Heart right ventricle (tissue), 16 donors: ENCODE measurements at regions of chr2 and their contacts with region 1.

Region 1: GRCh38 chr2:8681786-8682692 is at the start of gene ID2:
- DNase-seq: peak; percentile 99 to 100
- ATAC-seq: peak; percentile 69 to 90 (median 86)
- H3K4me3 ChIP-seq: peak within 1 kb of the TSS; percentile 67 to 96 (median 80)
- H3K27ac ChIP-seq: peak within 1 kb of the TSS; percentile 93 to 100 (median 99)
- H3K4me1 ChIP-seq: peaks cover 0 to 53% (median 32%) of the 10 kb centered on the region in 9 donors
- H3K27me3 ChIP-seq: peaks cover 0 to 12% (median 0%) of the 10 kb centered on the region in 7 donors
- CTCF ChIP-seq: no peak
- total RNA-seq, gene ID2: 20.8 to 49.7 (median 27.2) TPM

Region 2: DNA sequence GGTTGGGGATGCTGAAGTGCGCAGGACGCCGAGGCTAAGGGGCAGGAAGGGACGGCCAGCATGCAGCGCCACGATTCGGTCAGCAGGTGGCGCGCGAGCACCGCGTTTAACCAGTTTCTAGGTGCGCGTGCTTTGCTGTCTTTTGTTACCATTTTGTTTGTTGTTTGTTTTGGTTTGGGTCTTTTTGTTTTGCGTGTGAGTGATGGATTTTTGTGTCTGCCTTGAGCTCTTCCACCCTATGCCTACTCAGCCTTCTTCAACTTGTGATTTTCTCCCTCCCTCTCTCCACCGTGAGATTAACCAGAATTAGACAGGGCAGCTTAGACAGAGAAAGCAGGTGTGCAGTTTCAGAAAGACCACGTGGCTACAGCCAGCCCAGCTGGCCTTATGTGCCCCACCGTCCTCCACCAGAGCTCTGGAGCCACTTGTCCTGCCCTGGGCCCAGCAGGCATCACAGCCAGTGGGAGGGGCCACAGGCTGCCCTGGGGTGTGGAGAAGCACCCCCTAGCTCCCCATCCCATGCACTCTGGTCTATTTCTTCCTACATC is 1584.6 kb before region 1 on chr2:
- intact Hi-C with region 1: loop called in 4 of 10 experiments (anchors 5 to 10 kb)
- DNase-seq: peak; percentile 64 to 77
- ATAC-seq: peak; percentile 83 to 95 (median 90)
- H3K4me3 ChIP-seq: peak overlapping the region in 2 of 10 donors; percentile 4 to 38
- H3K27ac ChIP-seq: no peak overlapping the region
- H3K4me1 ChIP-seq: peaks cover 0 to 9% (median 3%) of the 10 kb centered on the region in 9 donors
- H3K27me3 ChIP-seq: no peaks in the 10 kb centered on the region
- CTCF ChIP-seq: peak; percentile 95 to 99 (median 99)

Region 3: DNA sequence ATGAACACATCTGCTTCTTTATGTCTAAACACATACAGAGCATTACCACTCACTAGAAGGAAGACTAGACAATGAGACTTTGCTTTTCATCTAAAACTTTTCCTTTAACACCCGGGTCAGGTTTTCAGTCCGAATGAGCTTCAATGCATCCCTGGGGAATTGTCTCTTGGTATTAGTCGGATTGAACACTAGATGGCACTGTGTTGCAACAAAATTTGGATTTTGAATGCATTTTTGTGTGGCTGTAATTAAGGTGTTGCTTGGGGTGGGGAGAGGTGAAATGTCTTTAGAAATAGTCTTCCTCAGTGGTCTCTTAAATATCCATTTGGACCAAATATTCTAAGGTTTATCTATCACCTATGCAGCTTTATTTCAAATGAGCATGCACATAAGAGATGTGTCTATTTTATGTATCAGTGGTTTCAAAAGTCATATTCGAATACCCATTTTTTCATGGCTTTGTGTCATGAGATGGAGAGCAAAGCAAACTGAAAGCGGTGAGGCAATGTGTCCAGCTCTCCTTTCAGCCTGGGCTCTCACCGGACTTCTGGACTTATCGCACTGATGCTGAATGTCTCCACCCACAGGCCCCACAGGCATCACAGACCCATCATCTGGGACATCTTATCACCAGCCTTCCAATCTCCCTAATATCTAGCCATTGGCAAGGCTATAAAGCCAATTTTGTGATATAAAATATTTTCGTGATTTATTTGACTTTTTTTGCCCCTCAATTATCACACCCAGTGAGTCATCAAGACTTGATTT is 1254.6 kb before region 1 on chr2:
- intact Hi-C with region 1: loop called (anchors 1 to 5 kb)
- DNase-seq: peak in 1 of 2 donors; percentile 52
- ATAC-seq: peak in 5 of 8 donors; percentile 34 to 54 (median 43)
- H3K4me3 ChIP-seq: no peak overlapping the region
- H3K27ac ChIP-seq: no peak overlapping the region
- H3K4me1 ChIP-seq: peaks cover 0 to 38% (median 3%) of the 10 kb centered on the region in 9 donors
- H3K27me3 ChIP-seq: peaks cover 0 to 62% (median 32%) of the 10 kb centered on the region in 7 donors
- CTCF ChIP-seq: peak; percentile 54 to 86 (median 76)

Region 4: GRCh38 chr2:8132351-8132831 is 549.6 kb before region 1 on chr2:
- intact Hi-C with region 1: loop called in 2 of 10 experiments (anchors 5 to 10 kb)
- DNase-seq: peak; percentile 24 to 45
- ATAC-seq: peak; percentile 53 to 83 (median 65)
- H3K4me3 ChIP-seq: no peak overlapping the region
- H3K27ac ChIP-seq: peak overlapping the region in 7 of 10 donors; percentile 15 to 74 (median 48)
- H3K4me1 ChIP-seq: peaks cover 4 to 44% (median 24%) of the 10 kb centered on the region in 9 donors
- H3K27me3 ChIP-seq: no peaks in the 10 kb centered on the region
- CTCF ChIP-seq: no peak

Region 5: DNA sequence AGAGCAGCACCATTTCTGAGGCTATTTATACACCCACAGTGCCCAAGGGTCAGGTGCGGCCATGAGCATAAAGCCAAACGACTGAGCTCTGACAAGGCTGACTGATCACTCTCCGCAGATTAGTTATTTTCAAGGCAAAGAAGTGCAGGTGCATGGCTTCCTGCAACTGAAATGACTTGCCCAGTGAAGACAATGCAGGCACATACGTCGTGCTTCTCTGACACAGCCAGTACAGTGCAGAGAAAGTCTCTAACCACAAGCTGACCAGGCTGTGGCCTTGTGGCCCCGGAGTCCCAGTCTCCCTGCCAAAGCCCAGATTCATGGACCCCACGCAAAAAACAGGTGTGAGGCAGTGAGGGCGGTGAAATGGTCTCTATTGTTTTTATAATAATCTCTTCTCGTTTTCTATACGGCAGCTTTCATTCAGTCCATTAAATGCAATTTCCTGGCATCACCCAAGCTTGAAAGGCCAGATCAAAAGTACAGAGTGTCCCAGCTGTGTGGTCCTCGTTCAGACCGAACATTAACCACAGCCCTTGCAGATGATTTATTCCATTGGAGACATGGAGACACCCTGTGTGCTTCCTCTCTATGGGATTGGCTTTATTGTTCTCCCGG is 447.2 kb before region 1 on chr2:
- intact Hi-C with region 1: loop called in 2 of 10 experiments (anchors 10 kb)
- DNase-seq: no peak
- ATAC-seq: peak in 5 of 8 donors; percentile 23 to 71 (median 33)
- H3K4me3 ChIP-seq: no peak overlapping the region
- H3K27ac ChIP-seq: peak overlapping the region in 2 of 10 donors; percentile 11 to 50
- H3K4me1 ChIP-seq: peaks cover 0 to 39% (median 14%) of the 10 kb centered on the region in 9 donors
- H3K27me3 ChIP-seq: no peaks in the 10 kb centered on the region
- CTCF ChIP-seq: no peak

Region 6: GRCh38 chr2:8477552-8478470 is 204.2 kb before region 1 on chr2:
- intact Hi-C with region 1: loop called in 2 of 10 experiments (anchors 5 kb)
- DNase-seq: no peak
- ATAC-seq: peak in 2 of 8 donors; percentile 5 to 21
- H3K4me3 ChIP-seq: peak overlapping the region in 1 of 10 donors; percentile 7
- H3K27ac ChIP-seq: peak overlapping the region in 5 of 10 donors; percentile 3 to 81 (median 49)
- H3K4me1 ChIP-seq: peaks cover 0 to 83% (median 34%) of the 10 kb centered on the region in 9 donors
- H3K27me3 ChIP-seq: no peaks in the 10 kb centered on the region
- CTCF ChIP-seq: no peak

Region 7: DNA sequence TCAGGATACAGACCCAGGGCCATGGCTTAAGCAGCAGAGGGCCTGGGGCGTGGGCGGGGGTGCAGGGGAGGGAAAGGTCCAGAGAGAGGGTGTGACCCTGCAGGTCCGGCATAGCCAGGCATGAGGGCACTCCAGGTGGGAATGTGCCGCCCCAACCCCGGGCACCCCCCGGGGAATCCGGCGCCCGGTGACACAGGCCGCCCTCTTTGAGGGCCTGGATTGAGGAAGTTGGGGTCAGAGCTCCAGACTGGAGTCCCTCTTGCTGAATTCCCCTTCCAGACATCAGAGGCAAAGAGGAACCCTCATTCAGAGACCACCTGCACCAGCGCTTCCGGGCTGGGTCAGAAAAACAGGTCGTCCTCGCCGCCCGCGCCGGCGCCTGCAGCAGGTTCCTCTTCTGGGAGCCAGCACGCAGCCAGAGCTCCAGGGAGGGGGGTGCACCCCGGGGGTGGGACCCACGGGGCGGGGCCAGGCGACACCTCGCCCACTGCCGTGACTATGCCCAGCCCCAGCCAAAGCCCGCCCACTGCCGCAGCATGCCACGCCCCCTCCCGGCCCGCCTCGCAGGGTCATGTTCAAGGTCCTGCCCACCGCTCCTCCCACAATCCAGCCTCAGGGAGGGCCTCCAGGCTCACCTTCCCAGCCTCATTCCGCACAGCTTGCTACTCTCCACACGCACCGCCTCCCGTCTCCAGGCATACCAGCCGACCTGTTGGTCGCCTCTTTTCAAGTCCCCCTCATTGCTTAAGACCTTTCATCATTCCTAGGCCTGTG is 98.5 kb before region 1 on chr2:
- intact Hi-C with region 1: loop called in 5 of 10 experiments (anchors 5 to 10 kb)
- DNase-seq: peak; percentile 94 to 95
- ATAC-seq: peak; percentile 95 to 99 (median 98)
- H3K4me3 ChIP-seq: peak overlapping the region in 6 of 10 donors; percentile 5 to 27 (median 18)
- H3K27ac ChIP-seq: peak overlapping the region in 9 of 10 donors; percentile 36 to 83 (median 57)
- H3K4me1 ChIP-seq: peaks cover 2 to 36% (median 21%) of the 10 kb centered on the region in 9 donors
- H3K27me3 ChIP-seq: no peaks in the 10 kb centered on the region
- CTCF ChIP-seq: no peak

Region 8: DNA sequence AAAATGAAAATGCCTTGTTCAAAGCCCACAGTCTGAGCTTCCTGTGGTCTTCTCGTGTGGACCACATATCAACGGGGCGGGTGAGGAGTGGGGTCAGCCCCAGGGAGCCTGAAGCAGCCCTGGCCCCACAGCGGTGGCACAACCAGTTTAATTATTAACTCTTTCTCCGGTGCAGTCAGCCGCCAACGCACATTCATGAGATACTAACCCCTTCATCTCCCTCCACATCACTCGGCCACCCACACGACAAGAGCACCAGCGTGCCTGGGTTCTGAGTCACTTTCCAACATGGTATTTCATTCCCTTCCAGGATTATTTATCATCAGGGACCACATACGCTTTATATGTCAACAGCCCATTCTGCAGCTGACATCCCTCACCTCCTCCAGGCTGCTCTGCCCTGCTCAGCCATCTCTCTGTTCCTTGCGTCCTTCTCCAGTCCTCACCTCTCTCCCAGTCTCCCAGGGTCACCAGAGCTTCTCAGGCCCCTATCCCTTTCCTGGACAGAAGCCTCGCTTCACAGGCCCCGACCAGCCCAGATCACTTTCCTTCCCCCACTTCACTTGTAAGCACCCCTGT is 48.2 kb before region 1 on chr2:
- intact Hi-C with region 1: no loop called
- DNase-seq: no peak
- ATAC-seq: peak in 6 of 8 donors; percentile 26 to 78 (median 46)
- H3K4me3 ChIP-seq: no peak overlapping the region
- H3K27ac ChIP-seq: no peak overlapping the region
- H3K4me1 ChIP-seq: peaks cover 0 to 14% (median 0%) of the 10 kb centered on the region in 9 donors
- H3K27me3 ChIP-seq: no peaks in the 10 kb centered on the region
- CTCF ChIP-seq: no peak